WTC11 (cell line): ENCODE measurements at regions of chr18 and their contacts with region 1.

Region 1: DNA sequence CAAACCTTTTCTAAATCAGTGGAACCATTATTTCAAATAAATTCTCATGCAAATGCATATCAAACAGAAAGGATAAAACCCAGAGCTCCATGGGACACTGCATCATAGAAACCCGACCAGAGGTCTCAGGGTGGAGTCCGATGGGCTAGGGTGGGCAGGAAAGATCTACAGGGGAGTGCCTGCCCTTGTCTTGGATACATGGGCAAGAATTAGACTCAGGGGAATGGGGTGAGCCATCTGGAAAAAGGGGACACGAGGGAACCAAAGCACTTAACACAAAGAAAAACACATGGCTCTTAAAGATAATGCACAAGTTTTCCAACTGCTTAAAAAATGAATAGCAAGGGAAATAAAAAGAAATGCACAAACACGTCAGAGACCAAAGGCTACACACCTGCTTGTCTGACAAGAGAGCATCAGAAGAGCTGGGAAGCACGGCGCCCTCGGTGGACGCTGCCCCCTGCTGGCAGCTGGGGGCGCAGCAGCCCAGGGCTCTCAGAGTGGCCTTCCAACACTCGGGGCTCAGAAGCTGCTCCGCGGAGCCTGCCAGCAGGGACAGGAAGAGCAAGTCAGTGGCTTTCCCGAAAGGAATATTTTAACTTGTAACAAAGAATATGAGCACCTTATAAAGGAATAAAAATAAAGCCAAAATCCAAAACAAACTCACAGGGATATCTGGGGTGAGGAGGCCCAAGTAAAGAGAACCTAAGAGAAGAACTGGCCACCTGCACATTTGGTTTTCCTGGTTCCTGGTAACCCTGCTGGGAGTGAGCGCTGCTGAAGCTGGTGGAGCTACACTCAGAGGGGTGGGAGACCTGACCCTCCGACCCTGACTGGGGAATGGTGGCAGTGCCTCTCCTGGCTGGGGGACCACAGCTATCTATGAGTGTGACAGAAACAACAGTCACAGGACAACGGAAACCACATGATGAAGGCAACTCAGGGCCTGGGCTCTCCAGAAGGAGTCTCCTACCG is 54.5 kb downstream of the SIGLEC15 start:
- DNase-seq: peak; percentile 83
- ATAC-seq: peak; percentile 99
- H3K4me3 Mint-ChIP-seq: no peak overlapping the region
- H3K27ac Mint-ChIP-seq: peak overlapping the region; percentile 58
- H3K4me1 Mint-ChIP-seq: peaks cover 14% of the 10 kb centered on the region
- H3K27me3 Mint-ChIP-seq: no peaks in the 10 kb centered on the region
- CTCF ChIP-seq: peak; percentile 93

Region 2: DNA sequence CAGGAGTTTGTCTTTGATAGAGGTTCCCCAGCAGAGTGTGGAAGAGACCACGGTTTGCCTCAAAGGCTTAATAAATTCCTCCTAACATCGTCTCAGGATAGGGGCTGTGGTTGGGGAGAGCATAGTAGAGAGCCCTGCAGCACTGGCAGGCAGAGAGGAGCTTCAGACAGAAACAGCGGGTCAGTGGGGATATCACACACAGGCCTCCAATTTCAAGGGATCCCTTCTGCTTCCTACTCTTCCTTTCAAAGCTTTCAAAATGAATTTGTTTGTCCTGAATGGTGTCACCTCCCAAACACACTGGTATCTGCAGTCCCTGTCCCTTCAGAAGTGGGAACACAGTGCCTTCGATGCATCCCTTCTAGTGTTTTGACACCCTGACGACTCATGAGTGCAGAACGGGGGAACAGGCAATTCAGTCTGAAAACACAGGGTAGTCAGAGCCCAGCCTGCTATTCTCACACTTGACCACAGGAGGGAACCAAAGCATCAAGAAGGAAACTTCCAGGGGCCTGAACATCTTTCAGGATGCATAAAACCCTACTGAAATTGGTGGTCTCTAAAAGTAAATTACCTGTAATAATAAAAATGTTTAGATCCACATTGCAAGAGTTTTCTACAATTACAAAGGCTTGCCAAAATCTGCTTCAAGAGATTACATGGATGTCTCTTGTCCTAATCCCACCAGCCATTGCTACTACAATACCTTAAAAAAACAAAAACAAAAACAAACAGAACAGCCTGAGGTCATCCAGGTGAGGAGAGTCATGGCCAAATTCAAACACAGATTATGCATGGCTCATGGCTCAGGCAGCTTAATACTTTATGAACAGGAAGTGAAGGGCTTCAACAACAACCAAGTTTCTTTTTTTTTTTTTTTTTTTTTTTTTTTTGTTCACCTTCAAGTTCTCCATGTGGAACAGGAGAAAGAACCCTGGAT is 214.9 kb before region 1 on chr18:
- CTCF ChIA-PET with region 1: interaction called, 72 read pairs
- POLR2A ChIA-PET with region 1: no interaction called
- DNase-seq: peak; percentile 70
- ATAC-seq: peak; percentile 75
- H3K4me3 Mint-ChIP-seq: no peak overlapping the region
- H3K27ac Mint-ChIP-seq: no peak overlapping the region
- H3K4me1 Mint-ChIP-seq: peaks cover 32% of the 10 kb centered on the region
- H3K27me3 Mint-ChIP-seq: 0 out of 2 replicates have a peak, but pooled peaks cover 2% of the 10 kb centered on the region
- CTCF ChIP-seq: peak; percentile 84

Region 3: DNA sequence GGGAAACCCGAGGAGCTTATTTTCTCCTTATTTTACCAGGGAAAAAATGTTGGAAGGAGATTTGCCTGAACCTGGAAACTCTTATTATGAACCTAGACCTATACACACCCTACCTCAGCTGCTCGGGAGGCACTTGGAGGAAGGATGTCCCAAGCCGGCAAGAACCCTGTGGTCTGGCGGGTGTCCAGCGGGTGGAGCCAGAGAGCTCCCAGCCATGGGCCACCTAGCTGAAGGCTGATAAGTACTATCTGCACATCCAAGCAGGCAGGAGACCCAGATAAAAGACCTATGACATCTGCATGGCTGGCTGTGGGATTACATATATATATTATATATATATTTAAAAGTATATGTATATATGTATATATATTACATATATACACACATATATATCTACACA is 157.1 kb before region 1 on chr18:
- CTCF ChIA-PET with region 1: interaction called, 35 read pairs
- POLR2A ChIA-PET with region 1: no interaction called
- DNase-seq: peak; percentile 91
- ATAC-seq: peak; percentile 99
- H3K4me3 Mint-ChIP-seq: no peak overlapping the region
- H3K27ac Mint-ChIP-seq: no peak overlapping the region
- H3K4me1 Mint-ChIP-seq: peaks cover 20% of the 10 kb centered on the region
- H3K27me3 Mint-ChIP-seq: no peaks in the 10 kb centered on the region; the same call in 1 of the 2 replicates
- CTCF ChIP-seq: peak; percentile 71

Region 4: GRCh38 chr18:45755934-45756333 is 124.0 kb before region 1 on chr18:
- CTCF ChIA-PET with region 1: no interaction called
- POLR2A ChIA-PET with region 1: no interaction called
- DNase-seq: no peak
- ATAC-seq: no peak
- H3K4me3 Mint-ChIP-seq: no peak overlapping the region
- H3K27ac Mint-ChIP-seq: no peak overlapping the region
- H3K4me1 Mint-ChIP-seq: peaks cover 47% of the 10 kb centered on the region
- H3K27me3 Mint-ChIP-seq: peaks cover 9% of the 10 kb centered on the region; the same call in 1 of the 2 replicates
- CTCF ChIP-seq: no peak

Region 5: DNA sequence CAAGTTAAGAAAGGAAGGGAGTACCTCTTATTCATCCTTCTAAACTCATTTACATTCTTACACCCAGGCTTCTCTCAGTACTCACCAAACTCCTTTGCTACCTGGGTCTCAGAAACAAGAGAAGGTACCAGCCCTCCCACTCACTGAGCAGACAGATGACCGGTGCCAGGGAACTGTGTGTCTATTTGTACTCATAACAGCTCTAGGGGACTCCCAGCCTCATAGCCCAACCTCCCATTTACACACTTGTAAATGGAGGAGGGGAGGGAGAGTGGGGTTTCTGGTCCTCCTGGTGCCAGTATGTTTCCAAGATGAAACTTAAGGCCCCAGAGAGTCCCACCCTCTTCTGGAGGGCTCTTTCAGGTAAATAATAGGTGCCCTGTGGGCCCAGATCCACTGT is 97.3 kb before region 1 on chr18:
- CTCF ChIA-PET with region 1: no interaction called
- POLR2A ChIA-PET with region 1: no interaction called
- DNase-seq: no peak
- ATAC-seq: no peak
- H3K4me3 Mint-ChIP-seq: no peak overlapping the region
- H3K27ac Mint-ChIP-seq: 0 out of 2 replicates have a peak overlapping the region, but pooled peaks have one; percentile 88
- H3K4me1 Mint-ChIP-seq: peaks cover 19% of the 10 kb centered on the region
- H3K27me3 Mint-ChIP-seq: peaks cover 3% of the 10 kb centered on the region; the same call in 1 of the 2 replicates
- CTCF ChIP-seq: no peak

Region 6: DNA sequence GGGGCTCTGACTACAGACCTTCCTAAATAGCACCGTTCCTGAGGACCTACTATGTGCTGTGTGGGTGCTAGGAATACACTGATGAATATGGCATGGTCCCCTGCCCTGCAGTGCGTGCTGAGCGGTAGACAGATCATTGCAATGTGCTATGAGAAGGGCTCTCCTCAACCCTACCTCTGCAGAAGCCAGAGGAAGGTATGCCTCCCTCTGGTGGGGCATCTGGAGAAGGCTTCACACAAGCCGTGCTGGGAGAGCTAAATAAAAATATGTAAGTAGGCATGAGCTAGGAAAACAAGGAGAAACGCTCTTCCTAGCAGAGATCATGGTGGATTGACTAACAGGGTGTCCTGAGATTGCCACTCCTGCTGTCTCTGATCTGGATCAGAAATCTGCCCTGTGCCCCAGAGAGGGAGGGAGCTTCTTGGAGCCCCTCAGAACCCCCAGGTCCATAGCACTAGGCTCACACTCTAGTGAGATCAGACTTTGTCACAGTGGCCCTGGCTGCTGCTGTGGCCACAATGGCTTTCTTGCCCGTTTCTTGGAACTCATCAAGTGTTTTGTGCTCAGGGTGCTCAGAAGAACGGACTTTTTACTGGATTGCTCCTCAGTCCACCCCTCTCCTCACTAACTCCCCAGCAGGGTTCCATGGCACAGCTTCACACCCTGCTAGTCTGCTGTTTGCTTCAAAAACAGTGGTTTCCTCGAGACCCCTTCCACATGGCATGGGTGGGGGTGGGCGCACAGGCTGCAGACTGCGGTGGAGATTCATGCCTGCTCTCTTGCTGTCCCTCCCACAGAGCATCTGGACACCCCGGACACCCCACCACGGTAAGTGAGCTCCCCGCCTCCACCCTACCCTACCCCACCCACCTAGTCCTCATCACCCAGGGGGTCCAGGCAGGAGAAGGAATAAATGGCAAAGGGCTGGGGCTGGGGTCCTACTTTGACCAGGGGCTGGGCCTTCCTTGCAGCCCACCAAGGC is 40.3 kb before region 1 on chr18:
- CTCF ChIA-PET with region 1: interaction called, 19 read pairs
- POLR2A ChIA-PET with region 1: no interaction called
- DNase-seq: peak; percentile 56
- ATAC-seq: peak; percentile 65
- H3K4me3 Mint-ChIP-seq: no peak overlapping the region
- H3K27ac Mint-ChIP-seq: no peak overlapping the region
- H3K4me1 Mint-ChIP-seq: peaks cover 22% of the 10 kb centered on the region
- H3K27me3 Mint-ChIP-seq: peaks cover 44% of the 10 kb centered on the region
- CTCF ChIP-seq: peak; percentile 40; the same call in 1 of the 2 replicates

Region 7: DNA sequence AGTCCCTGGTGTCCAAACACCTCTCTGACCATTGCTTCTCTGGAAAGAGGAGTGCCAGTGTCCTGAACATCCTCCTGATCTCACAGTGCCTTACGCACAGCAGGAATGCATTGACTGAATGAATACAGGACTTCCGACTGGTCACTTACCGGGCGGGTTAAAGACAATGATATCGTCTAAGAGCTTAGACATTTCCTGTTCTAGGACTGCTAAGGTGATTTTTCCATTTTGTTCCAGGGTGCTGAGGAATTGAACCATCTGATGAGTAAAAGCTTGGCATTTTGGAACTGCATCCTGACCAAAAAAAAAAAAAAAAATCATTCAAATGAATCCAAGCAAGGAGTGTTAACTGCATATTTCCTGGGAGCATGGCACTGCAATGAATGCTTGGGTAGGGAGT is 14.5 kb before region 1 on chr18:
- CTCF ChIA-PET with region 1: interaction called, 20 read pairs
- POLR2A ChIA-PET with region 1: no interaction called
- DNase-seq: no peak
- ATAC-seq: no peak
- H3K4me3 Mint-ChIP-seq: no peak overlapping the region
- H3K27ac Mint-ChIP-seq: no peak overlapping the region
- H3K4me1 Mint-ChIP-seq: no peaks in the 10 kb centered on the region
- H3K27me3 Mint-ChIP-seq: no peaks in the 10 kb centered on the region
- CTCF ChIP-seq: no peak

Region 8: GRCh38 chr18:45910405-45911023 is 30.5 kb after region 1 on chr18:
- CTCF ChIA-PET with region 1: interaction called, 17 read pairs
- POLR2A ChIA-PET with region 1: no interaction called
- DNase-seq: peak; percentile 80
- ATAC-seq: peak; percentile 96
- H3K4me3 Mint-ChIP-seq: no peak overlapping the region
- H3K27ac Mint-ChIP-seq: no peak overlapping the region
- H3K4me1 Mint-ChIP-seq: no peaks in the 10 kb centered on the region
- H3K27me3 Mint-ChIP-seq: no peaks in the 10 kb centered on the region
- CTCF ChIP-seq: peak; percentile 65